Heart right ventricle (tissue), 16 donors: ENCODE measurements at regions of chr5 and their contacts with region 1.

Region 1: DNA sequence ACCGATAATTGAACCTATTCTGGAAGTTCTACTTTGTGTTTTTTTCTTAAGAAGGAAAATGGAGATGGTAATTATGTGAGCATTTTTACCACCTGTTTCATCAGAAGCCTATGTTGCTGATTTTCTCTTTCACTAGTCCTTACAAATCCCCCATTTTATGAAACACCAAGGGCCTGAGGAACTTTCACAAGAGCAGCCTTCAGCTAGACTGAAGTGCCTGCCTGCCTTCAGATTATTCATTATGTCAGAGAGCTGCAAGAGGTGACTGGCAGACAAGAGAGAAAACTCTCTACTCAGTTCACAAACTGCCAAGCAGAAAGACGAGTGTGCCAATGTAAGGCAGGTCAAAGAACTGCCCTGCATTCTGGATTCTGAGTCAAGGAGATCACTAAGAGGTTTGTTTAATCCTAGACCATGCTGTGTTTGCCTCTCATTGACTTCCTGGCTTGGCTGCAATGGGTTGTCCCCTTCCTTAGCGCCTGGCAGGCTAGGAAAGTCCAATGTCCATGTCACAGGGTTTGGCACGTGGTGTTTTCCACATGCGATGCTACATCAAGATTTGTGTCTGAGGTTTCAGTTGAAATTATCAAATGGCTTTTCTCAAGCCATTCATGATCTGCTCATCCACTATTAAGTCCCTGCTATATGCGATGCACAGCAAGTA is 143.3 kb downstream of the CDC42SE2 start:
- DNase-seq: no peak
- ATAC-seq: no peak
- H3K4me3 ChIP-seq: no peak overlapping the region
- H3K27ac ChIP-seq: no peak overlapping the region
- H3K4me1 ChIP-seq: no peaks in the 10 kb centered on the region
- H3K27me3 ChIP-seq: no peaks in the 10 kb centered on the region
- CTCF ChIP-seq: no peak

Region 2: GRCh38 chr5:131165119-131165727 is 241.9 kb before region 1 on chr5 and contains the start of gene HINT1:
- intact Hi-C with region 1: loop called in 3 of 10 experiments (anchors 10 kb)
- DNase-seq: peak; percentile 89 to 94
- ATAC-seq: peak; percentile 95 to 99 (median 98)
- H3K4me3 ChIP-seq: peak within 1 kb of the TSS; percentile 73 to 95 (median 82)
- H3K27ac ChIP-seq: peak within 1 kb of the TSS; percentile 85 to 98 (median 92)
- H3K4me1 ChIP-seq: peaks cover 0 to 30% (median 21%) of the 10 kb centered on the region in 9 donors
- H3K27me3 ChIP-seq: no peaks in the 10 kb centered on the region
- CTCF ChIP-seq: peak in 3 of 9 donors; percentile 8 to 24 (median 15)
- total RNA-seq, gene HINT1: 113 to 190 (median 130) TPM

Region 3: GRCh38 chr5:131277875-131278740 is 129.0 kb before region 1 on chr5:
- intact Hi-C with region 1: loop called in 1 of 10 experiments (anchors 10 kb)
- DNase-seq: no peak
- ATAC-seq: no peak
- H3K4me3 ChIP-seq: no peak overlapping the region
- H3K27ac ChIP-seq: peak overlapping the region in 1 of 10 donors; percentile 29
- H3K4me1 ChIP-seq: peaks cover 0 to 81% (median 6%) of the 10 kb centered on the region in 9 donors
- H3K27me3 ChIP-seq: no peaks in the 10 kb centered on the region
- CTCF ChIP-seq: no peak